ENCODE measurements at regions of chr1 and their contacts with region 1.

Region 1: DNA sequence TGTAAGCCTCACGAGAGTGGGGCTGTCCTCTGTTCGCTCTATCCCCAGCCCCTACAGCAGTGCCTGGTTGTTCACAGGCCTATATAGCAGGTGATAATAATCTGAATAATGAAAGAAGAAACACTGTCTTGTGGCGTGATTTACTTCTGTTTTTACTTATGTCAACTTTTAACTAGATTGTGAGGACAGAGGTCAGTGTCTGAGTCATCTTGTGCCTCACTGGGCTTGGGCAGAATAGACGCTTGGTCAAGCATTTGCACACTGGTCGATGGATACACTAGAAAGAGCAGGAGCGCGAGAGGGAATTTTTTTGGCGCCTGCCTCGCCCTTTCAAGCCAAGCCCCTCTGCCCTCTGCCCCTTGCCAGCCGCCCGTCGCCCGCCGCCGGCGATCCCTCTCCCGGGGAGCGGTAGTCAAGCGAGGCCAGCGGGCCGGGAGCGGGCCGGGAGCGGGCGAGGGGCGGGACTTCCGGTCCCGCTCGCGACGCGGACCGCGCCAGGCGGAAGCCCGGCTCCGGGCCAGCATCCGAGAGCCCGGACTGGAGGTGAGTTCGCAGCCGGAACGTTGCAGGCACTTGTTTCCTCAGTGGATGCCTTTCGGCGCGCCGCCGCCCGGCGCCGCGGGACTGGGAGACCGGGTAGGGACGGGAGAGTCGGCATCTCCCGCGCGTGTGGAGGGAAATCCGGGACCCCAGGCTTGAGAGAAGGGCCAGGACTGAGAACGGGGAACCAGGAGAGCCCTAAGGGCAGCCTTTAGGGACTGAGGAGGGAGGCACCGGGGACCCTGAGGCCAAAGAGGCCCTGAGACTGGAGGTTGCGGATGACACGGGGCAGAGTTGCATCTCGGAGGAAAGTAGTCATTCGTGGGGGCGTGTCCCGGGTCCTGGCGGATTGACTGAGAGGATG is at the start of gene DISP1:
- DNase-seq: peak; percentile 83 to 86
- H3K4me3 ChIP-seq: peak within 1 kb of the TSS; percentile 55
- H3K4me3 Mint-ChIP-seq: peak within 1 kb of the TSS; percentile 97
- H3K27ac Mint-ChIP-seq: peak within 1 kb of the TSS; percentile 72
- H3K4me1 ChIP-seq: peaks cover 25% of the 10 kb centered on the region
- H3K4me1 Mint-ChIP-seq: peaks cover 19% of the 10 kb centered on the region
- H3K27me3 ChIP-seq: no peaks in the 10 kb centered on the region
- H3K27me3 Mint-ChIP-seq: no peaks in the 10 kb centered on the region
- CTCF ChIP-seq: no peak
- total RNA-seq, gene DISP1: 6.6 and 7.1 TPM in 2 replicates

Region 2: GRCh38 chr1:222798116-222798515 is 16.7 kb before region 1 on chr1:
- CTCF ChIA-PET with region 1: no interaction called
- POLR2A ChIA-PET with region 1: interaction called, 6 read pairs
- intact Hi-C with region 1: loop called (anchors 1 kb)
- DNase-seq: peak; percentile 48 to 52
- H3K4me3 ChIP-seq: no peak overlapping the region
- H3K4me3 Mint-ChIP-seq: no peak overlapping the region
- H3K27ac Mint-ChIP-seq: peak overlapping the region; percentile 71
- H3K4me1 ChIP-seq: peaks cover 27% of the 10 kb centered on the region
- H3K4me1 Mint-ChIP-seq: peaks cover 38% of the 10 kb centered on the region
- H3K27me3 ChIP-seq: no peaks in the 10 kb centered on the region
- H3K27me3 Mint-ChIP-seq: no peaks in the 10 kb centered on the region
- CTCF ChIP-seq: no peak

Measured in Caco-2 (cell line).